ENCODE measurements at regions of chr10 and their contacts with region 1.

Region 1: DNA sequence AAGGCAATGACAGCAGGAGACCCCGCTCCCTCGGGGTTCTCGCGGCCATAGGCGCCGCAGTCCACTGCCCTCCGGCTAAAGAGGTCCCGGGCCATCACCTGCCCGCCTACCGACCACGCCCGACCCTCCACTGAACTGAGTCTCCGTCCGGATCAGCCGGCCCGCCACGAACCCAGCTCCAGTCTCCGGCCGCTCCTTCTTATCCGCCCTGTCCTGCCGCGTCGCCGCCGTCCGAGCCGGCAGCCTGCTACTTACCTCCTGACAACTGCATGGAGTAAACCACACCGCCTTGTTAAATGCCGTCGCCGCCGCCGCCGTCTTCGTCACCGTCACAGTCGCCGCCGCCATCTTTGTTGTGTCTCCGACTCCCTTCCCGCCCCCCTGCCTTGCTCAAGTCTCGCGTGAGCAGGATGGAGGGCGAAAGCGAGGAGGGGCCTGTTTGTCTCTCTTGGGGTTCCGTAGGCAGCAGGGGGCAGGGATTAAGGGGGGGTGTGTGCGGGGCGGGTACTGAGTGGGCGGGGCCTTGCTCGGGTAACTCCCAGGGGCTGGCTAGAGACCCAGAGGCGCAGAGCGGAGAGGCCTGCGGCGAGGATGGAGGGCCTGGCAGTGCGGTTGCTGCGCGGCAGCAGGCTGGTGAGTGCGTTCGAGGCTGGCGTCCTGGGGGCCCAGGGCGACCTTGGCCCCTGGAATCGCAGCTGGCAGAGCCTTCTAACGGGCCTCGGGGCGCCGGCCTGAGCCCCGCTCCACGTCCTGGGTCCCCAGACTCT is at the starts of genes ACADSB and IKZF5:
- DNase-seq: peak; percentile 90 to 99 (median 93)

Region 2: GRCh38 chr10:122980209-122981065 is 28.2 kb before region 1 on chr10 and contains the start of gene PSTK:
- intact Hi-C with region 1: loop called (anchors 1 kb)
- DNase-seq: peak; percentile 82 to 98 (median 86)

Region 3: GRCh38 chr10:123027861-123028260 is 19.2 kb after region 1 on chr10:
- intact Hi-C with region 1: loop called (anchors 1 kb)
- DNase-seq: no peak

Region 4: DNA sequence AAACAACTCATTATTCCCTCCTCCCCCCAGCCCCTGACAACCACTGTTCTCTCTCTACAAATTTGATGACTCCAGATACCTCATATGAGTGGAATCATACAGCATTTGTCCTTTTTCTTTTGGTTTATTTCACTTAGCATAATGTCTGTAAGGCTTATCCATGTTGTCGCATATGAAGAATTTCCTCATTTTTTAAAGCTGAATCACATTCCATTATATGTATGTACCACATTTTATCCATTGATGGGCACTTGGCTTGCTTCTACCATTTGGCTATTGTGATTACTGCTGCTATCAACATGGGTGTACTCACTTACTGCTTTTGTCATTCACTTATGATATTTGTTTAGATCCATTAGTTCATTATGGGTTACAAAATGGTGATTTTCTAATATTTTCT is 258.3 kb after region 1 on chr10:
- intact Hi-C with region 1: no loop called
- DNase-seq: no peak